Dendritic cell treated with granulocyte-macrophage colony-stimulating factor and Interleukin-4, amounts not matched to agents 40 ng/mL and 50 ng/mL, for 4 days (primary cell): ENCODE measurements at regions of chr16 and their contacts with region 1.

Region 1: GRCh38 chr16:27154705-27155521 is 48.4 kb upstream of the KDM8 start:
- H3K4me3 Mint-ChIP-seq: no peak overlapping the region
- H3K27ac Mint-ChIP-seq: no peak overlapping the region
- H3K4me1 Mint-ChIP-seq: peaks cover 8% of the 10 kb centered on the region
- H3K27me3 Mint-ChIP-seq: no peaks in the 10 kb centered on the region

Region 2: GRCh38 chr16:27367461-27368357 is 212.8 kb after region 1 on chr16:
- intact Hi-C with region 1: loop called (anchors 5 kb)
- H3K4me3 Mint-ChIP-seq: peak overlapping the region; percentile 62
- H3K27ac Mint-ChIP-seq: peak overlapping the region; percentile 82
- H3K4me1 Mint-ChIP-seq: peaks cover 53% of the 10 kb centered on the region
- H3K27me3 Mint-ChIP-seq: no peaks in the 10 kb centered on the region

Region 3: DNA sequence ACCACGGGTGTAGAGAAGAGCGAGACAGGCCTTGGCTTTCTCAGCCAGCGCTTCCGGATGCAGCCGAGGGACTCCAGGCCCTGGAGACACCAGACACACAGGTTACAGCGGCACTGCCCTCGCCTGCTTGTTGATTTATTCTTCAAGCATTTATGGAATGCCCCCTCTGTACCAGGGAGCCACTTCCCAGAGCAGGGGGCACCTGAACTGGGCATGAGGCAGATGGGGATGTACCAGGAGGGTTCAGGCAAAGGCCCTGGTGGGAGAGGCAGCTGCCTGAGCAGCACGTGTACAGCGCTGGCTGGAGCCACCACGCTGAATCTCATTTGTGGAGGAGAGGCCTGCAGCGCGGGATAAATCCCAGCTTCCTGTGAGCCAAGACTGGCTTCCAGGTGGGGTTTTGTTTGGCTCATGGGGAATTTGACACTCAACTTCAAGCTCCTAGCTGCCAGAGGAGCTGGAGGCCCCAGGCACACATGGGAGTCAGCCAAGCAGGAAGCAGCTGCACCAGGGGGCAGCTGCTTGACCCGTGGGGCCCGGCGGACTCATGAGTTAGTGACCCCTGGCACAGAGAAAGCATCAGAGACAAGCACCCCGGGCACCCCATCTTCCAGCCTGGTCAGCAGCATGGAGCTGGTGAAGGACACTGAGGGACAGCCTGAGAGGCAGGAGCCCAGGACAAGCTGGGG is 306.7 kb after region 1 on chr16:
- intact Hi-C with region 1: loop called (anchors 1 kb)
- H3K4me3 Mint-ChIP-seq: no peak overlapping the region
- H3K27ac Mint-ChIP-seq: no peak overlapping the region
- H3K4me1 Mint-ChIP-seq: peaks cover 16% of the 10 kb centered on the region
- H3K27me3 Mint-ChIP-seq: no peaks in the 10 kb centered on the region